ENCODE measurements at regions of chr15 and their contacts with region 1.

Region 1: DNA sequence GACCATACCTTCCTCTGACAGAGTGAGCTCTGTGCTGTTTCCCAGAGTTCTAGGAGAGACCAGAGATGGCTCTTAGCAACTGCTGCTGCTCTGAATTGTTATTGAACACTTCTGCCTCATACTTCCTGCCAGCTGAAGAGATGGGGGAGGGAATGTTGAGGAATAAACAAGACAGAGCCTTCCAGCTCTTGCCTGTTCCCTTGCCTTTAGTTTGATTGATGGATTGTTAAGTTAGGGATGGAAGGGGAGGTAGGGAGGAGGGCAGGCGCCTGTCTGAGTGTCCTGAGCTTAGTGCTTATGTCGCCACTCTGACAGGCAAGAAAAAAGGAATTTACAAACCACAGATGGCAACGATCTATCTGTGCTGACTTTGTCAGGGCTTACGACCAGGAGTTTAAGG is 42.8 kb downstream of the ZNF609 start:
- DNase-seq: no peak
- ATAC-seq: peak in 2 of 4 donors; percentile 27 to 35
- H3K4me3 ChIP-seq: no peak overlapping the region
- H3K27ac ChIP-seq: no peak overlapping the region
- H3K4me1 ChIP-seq: peaks cover 39% of the 10 kb centered on the region
- H3K27me3 ChIP-seq: no peaks in the 10 kb centered on the region
- CTCF ChIP-seq: no peak

Region 2: DNA sequence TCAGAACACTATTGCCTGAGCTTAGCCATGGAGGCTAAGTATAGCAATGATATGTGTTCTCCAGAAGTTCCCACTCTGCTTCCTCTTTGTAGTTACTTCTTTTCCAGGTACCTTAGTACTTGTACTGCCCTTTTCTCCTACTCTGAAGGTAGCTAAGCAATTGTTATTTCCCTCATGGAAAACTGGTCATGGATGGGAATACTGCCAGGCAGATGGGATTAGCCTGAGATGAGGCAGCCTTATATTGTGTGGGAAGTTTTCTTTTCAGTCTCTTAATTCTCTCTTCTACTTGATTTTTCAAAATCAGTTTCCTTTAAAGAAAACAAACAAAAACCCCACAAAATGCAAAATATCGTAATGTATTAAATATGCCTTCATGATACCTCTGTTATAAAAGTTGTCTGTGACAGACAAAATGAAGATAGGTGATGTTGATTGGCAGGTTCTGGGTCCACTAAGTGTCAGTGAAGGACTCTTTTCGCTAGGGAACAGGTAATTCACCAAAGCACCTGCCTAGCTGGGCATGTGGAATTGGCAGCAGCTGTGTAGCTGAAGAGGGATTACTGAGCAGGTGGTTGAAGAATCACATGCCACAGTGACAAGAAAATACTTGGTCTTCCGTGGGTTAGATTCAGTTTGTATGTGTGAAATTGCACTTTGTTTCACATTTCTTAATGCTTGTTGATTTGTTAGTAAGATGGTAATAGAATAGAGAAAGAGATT is 38.8 kb before region 1 on chr15:
- intact Hi-C with region 1: loop called in 1 of 2 experiments (anchors 2 kb)
- DNase-seq: no peak
- ATAC-seq: peak in 1 of 4 donors; percentile 30
- H3K4me3 ChIP-seq: no peak overlapping the region
- H3K27ac ChIP-seq: peak overlapping the region; percentile 53
- H3K4me1 ChIP-seq: peaks cover 50% of the 10 kb centered on the region
- H3K27me3 ChIP-seq: no peaks in the 10 kb centered on the region
- CTCF ChIP-seq: no peak

Region 3: DNA sequence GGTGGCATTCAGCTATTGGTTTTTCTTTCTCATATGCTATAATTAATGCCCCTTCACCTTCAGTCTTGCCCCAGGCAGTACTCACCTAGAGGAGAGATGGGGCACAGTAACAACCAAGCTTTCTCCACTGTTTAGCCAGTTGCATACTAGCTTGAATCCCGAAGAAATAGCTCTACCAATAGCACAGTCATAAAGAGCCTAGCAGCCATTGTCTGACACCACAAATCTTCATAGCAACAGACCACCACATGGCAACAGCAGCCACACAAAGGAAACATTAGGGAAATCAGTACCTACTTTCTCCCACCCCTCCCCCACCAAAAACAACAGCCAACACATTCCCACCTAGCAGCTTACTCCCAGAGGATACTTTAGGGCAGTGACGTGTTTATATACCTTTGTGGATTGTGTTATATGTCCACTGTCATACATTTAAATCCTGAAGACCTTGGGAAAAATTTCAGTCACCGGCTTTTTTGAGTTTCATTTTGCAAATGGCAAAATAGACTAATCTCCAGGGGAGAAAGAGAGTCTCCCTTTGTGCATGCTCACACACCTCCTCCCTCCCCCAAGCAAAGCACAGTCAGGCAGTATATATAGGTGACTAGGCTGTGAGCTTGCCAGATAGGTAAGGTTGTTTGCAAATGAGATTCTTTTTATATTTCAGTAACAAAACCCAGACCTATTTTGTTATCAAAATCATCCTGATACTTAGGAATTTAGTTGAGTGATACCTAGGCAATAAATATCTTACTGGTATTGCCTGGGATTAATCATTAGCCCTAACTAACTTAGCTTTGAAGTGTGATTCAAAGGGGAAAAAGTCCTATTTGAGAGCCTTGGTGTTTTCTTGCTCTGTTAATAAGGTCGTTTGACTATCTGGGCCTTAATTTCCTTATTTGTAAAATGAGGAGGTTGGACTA is 131.6 kb after region 1 on chr15:
- intact Hi-C with region 1: no loop called
- DNase-seq: no peak
- ATAC-seq: peak in 2 of 4 donors; percentile 51 to 66
- H3K4me3 ChIP-seq: no peak overlapping the region
- H3K27ac ChIP-seq: peak overlapping the region; percentile 42
- H3K4me1 ChIP-seq: peaks cover 22% of the 10 kb centered on the region
- H3K27me3 ChIP-seq: no peaks in the 10 kb centered on the region
- CTCF ChIP-seq: no peak

Measured in psoas muscle (tissue), 8 donors.